ENCODE measurements at regions of chrX and their contacts with region 1.

Region 1: DNA sequence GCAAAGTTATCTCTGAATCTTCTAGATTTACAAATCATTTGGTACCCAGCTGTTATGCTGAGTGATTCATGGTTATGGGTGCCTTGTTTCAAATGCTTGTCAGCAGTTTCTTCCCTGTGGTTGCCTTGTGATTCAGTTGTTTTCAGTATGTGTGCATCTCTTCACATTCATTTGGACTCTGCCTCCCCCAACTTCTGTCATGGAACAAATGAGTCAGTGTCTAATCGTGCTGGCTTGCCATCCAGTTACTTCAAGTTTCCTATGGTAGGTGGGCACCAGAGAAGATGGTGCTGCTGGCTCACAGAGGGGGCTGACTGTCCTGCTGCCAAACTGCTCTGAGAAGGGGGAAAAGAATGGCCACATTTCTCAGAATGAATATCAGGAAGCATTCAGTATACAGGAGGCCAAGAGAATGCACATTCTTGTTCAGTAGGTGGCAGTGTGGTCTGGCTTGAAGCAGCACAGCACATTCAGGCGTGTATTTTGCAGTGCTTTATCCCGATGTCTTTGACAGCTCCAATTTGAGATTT is 260.9 kb downstream of the GLUD2 start:
- DNase-seq: peak; percentile 80
- ATAC-seq: peak; percentile 86
- H3K4me3 Mint-ChIP-seq: peak overlapping the region; percentile 49
- H3K27ac Mint-ChIP-seq: peak overlapping the region; percentile 85
- H3K4me1 Mint-ChIP-seq: peaks cover 23% of the 10 kb centered on the region
- H3K27me3 Mint-ChIP-seq: no peaks in the 10 kb centered on the region

Region 2: GRCh38 chrX:120499301-120500072 is 808.9 kb before region 1 on chrX:
- CTCF ChIA-PET with region 1: no interaction called
- POLR2A ChIA-PET with region 1: no interaction called
- intact Hi-C with region 1: loop called in 1 of 2 experiments (anchors 10 kb)
- DNase-seq: no peak
- ATAC-seq: no peak
- H3K4me3 Mint-ChIP-seq: no peak overlapping the region
- H3K27ac Mint-ChIP-seq: no peak overlapping the region
- H3K4me1 Mint-ChIP-seq: peaks cover 3% of the 10 kb centered on the region
- H3K27me3 Mint-ChIP-seq: no peaks in the 10 kb centered on the region

Region 3: GRCh38 chrX:120672390-120672789 is 636.0 kb before region 1 on chrX:
- CTCF ChIA-PET with region 1: no interaction called
- POLR2A ChIA-PET with region 1: no interaction called
- intact Hi-C with region 1: loop called (anchors 1 kb)
- DNase-seq: no peak
- ATAC-seq: no peak
- H3K4me3 Mint-ChIP-seq: no peak overlapping the region
- H3K27ac Mint-ChIP-seq: no peak overlapping the region
- H3K4me1 Mint-ChIP-seq: peaks cover 20% of the 10 kb centered on the region
- H3K27me3 Mint-ChIP-seq: no peaks in the 10 kb centered on the region

Region 4: GRCh38 chrX:120736989-120737388 is 571.4 kb before region 1 on chrX:
- CTCF ChIA-PET with region 1: no interaction called
- POLR2A ChIA-PET with region 1: no interaction called
- intact Hi-C with region 1: loop called in 1 of 2 experiments (anchors 2 kb)
- DNase-seq: no peak
- ATAC-seq: peak; percentile 89
- H3K4me3 Mint-ChIP-seq: no peak overlapping the region
- H3K27ac Mint-ChIP-seq: peak overlapping the region; percentile 74
- H3K4me1 Mint-ChIP-seq: peaks cover 23% of the 10 kb centered on the region
- H3K27me3 Mint-ChIP-seq: no peaks in the 10 kb centered on the region

Region 5: GRCh38 chrX:121106484-121107235 is 201.7 kb before region 1 on chrX:
- CTCF ChIA-PET with region 1: no interaction called
- POLR2A ChIA-PET with region 1: no interaction called
- intact Hi-C with region 1: loop called in 1 of 2 experiments (anchors 5 kb)
- DNase-seq: peak; percentile 16
- ATAC-seq: peak; percentile 58
- H3K4me3 Mint-ChIP-seq: no peak overlapping the region
- H3K27ac Mint-ChIP-seq: no peak overlapping the region
- H3K4me1 Mint-ChIP-seq: peaks cover 4% of the 10 kb centered on the region
- H3K27me3 Mint-ChIP-seq: no peaks in the 10 kb centered on the region

Region 6: DNA sequence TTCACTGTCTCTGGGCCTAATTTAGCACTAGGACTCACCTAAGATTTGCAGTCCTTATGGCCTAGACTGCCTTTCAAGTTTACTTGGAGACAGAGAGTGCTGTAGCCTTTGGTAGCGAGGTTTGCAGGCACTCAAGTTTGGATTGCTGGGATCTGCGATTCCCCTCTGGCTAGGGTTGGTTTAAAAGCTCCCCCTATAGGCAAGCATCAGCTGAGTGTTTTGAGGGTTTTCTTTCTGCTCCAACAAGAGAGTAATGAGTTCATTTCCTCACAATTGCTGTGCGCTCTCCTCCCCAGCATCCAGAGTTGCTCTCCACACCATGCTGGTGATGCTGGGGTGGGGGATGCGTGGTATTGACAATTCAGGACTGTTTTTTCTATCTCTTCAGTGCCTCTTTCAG is 54.0 kb before region 1 on chrX:
- CTCF ChIA-PET with region 1: interaction called, 4 read pairs
- POLR2A ChIA-PET with region 1: no interaction called
- intact Hi-C with region 1: loop called (anchors 1 to 2 kb)
- DNase-seq: no peak
- ATAC-seq: no peak
- H3K4me3 Mint-ChIP-seq: no peak overlapping the region
- H3K27ac Mint-ChIP-seq: no peak overlapping the region
- H3K4me1 Mint-ChIP-seq: peaks cover 16% of the 10 kb centered on the region
- H3K27me3 Mint-ChIP-seq: no peaks in the 10 kb centered on the region

Region 7: GRCh38 chrX:121333942-121334341 is 25.6 kb after region 1 on chrX:
- CTCF ChIA-PET with region 1: no interaction called
- POLR2A ChIA-PET with region 1: no interaction called
- intact Hi-C with region 1: no loop called
- DNase-seq: no peak
- ATAC-seq: no peak
- H3K4me3 Mint-ChIP-seq: no peak overlapping the region
- H3K27ac Mint-ChIP-seq: no peak overlapping the region
- H3K4me1 Mint-ChIP-seq: no peaks in the 10 kb centered on the region
- H3K27me3 Mint-ChIP-seq: no peaks in the 10 kb centered on the region